Natural killer cell (primary cell): ENCODE measurements at regions of chr19 and their contacts with region 1.

Region 1: DNA sequence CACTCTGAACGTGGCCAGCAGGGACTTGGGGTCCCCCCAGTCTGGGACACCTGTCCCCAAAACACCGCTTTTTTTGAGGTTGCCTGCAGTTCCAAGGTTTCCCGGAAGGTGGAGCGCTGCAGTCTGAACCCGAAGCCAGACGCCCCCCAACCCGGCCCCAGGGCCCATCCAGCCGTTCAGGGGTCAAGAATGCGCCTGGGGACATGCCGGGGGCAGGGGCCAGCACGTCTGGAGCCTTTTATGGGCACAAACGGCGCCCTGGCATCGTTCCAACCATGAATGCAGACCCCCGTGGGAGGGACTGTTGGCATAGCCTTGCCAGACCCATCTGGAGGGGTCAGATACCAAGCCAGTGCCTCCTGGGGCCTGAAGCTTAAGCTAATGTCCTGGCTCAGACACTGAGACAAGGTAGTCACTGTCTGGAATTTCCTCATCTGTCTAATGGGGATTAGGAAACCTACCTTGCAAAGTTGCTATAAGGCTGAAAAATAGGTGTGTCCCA is 6.9 kb downstream of the S1PR5 start:
- DNase-seq: peak; percentile 62 to 76
- ATAC-seq: peak in 2 of 3 donors; percentile 17
- H3K4me3 ChIP-seq: no peak overlapping the region
- H3K4me3 Mint-ChIP-seq: peak overlapping the region; percentile 62
- H3K27ac ChIP-seq: peak overlapping the region; percentile 64
- H3K27ac Mint-ChIP-seq: peak overlapping the region; percentile 86 to 91
- H3K4me1 ChIP-seq: peaks cover 82% of the 10 kb centered on the region
- H3K4me1 Mint-ChIP-seq: peaks cover 42 to 52% of the 10 kb centered on the region in 2 donors
- H3K27me3 ChIP-seq: no peaks in the 10 kb centered on the region
- H3K27me3 Mint-ChIP-seq: no peaks in the 10 kb centered on the region
- CTCF ChIP-seq: peak; percentile 81

Region 2: DNA sequence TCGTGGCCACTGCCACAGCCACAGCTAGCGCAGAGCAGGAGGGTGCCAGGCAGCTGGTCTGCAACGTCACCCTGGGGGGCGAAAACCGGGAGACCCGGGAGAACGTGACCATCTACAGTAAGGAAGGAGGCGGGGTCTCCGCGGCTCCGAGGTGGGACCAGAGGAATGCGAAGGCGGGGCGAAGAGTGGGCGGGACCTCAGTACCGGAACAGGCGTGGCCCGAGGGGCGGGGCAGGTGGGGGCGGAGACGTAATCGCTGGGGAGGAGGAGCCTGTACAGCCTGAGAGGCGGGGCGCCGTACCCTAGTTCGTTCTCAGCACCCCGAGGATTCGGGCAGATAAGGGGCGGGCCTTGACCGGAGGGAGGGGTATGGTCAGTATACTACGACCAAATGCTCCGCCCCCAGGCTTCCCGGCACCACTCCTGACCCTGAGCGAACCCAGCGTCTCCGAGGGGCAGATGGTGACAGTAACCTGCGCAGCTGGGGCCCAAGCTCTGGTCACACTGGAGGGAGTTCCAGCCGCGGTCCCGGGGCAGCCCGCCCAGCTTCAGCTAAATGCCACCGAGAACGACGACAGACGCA is 218.1 kb before region 1 on chr19:
- intact Hi-C with region 1: loop called (anchors 5 kb)
- DNase-seq: peak; percentile 75 to 77
- ATAC-seq: peak; percentile 52 to 70 (median 59)
- H3K4me3 ChIP-seq: peak overlapping the region; percentile 15
- H3K4me3 Mint-ChIP-seq: peak overlapping the region; percentile 86
- H3K27ac ChIP-seq: no peak overlapping the region
- H3K27ac Mint-ChIP-seq: peak overlapping the region; percentile 63 to 71
- H3K4me1 ChIP-seq: peaks cover 90% of the 10 kb centered on the region
- H3K4me1 Mint-ChIP-seq: peaks cover 49 to 68% of the 10 kb centered on the region in 2 donors
- H3K27me3 ChIP-seq: peaks cover 63% of the 10 kb centered on the region
- H3K27me3 Mint-ChIP-seq: peaks cover 7 to 40% of the 10 kb centered on the region in 2 donors
- CTCF ChIP-seq: no peak

Region 3: GRCh38 chr19:10551698-10552301 is 41.4 kb after region 1 on chr19:
- intact Hi-C with region 1: loop called (anchors 2 kb)
- DNase-seq: peak; percentile 49 to 73
- ATAC-seq: peak; percentile 27 to 44 (median 44)
- H3K4me3 ChIP-seq: no peak overlapping the region
- H3K4me3 Mint-ChIP-seq: peak overlapping the region; percentile 35
- H3K27ac ChIP-seq: peak overlapping the region; percentile 68
- H3K27ac Mint-ChIP-seq: peak overlapping the region; percentile 94
- H3K4me1 ChIP-seq: peaks cover 65% of the 10 kb centered on the region
- H3K4me1 Mint-ChIP-seq: peaks cover 34 to 55% of the 10 kb centered on the region in 2 donors
- H3K27me3 ChIP-seq: no peaks in the 10 kb centered on the region
- H3K27me3 Mint-ChIP-seq: no peaks in the 10 kb centered on the region
- CTCF ChIP-seq: peak; percentile 19

Region 4: DNA sequence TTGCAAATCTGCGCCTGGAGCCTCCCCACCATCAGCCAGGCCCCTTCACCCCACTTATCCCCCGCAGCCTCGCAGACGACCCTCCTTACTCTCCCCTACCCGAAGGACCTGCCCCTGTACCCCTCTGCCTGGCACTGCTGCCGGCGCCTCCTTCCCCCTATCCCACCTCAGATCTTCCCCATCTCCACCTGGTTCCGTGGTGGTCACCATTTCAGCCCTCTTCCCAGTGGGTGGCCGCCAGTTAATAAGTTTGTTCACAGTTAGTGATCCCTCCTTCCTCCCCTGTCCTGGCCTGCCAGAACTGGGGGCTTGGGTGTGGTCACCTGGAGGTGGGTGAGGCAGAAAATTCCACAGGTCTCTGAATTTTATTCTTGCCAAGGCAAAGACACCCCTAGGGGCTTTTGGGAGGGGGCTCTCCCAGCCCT is 115.4 kb after region 1 on chr19:
- intact Hi-C with region 1: no loop called
- DNase-seq: no peak
- ATAC-seq: no peak
- H3K4me3 ChIP-seq: no peak overlapping the region
- H3K4me3 Mint-ChIP-seq: peak overlapping the region; percentile 55
- H3K27ac ChIP-seq: no peak overlapping the region
- H3K27ac Mint-ChIP-seq: peak overlapping the region; percentile 68 to 74
- H3K4me1 ChIP-seq: peaks cover 42% of the 10 kb centered on the region
- H3K4me1 Mint-ChIP-seq: peaks cover 37 to 44% of the 10 kb centered on the region in 2 donors
- H3K27me3 ChIP-seq: no peaks in the 10 kb centered on the region
- H3K27me3 Mint-ChIP-seq: no peaks in the 10 kb centered on the region
- CTCF ChIP-seq: no peak